K562 (cell line): ENCODE measurements at regions of chr2 and their contacts with region 1.

Region 1: GRCh38 chr2:119753041-119753929 is 6.4 kb upstream of the PTPN4 start:
- DNase-seq: peak in 2 of 4 experiments; percentile 56 to 69
- ATAC-seq: peak; percentile 90
- H3K4me3 ChIP-seq: no peak overlapping the region
- H3K27ac ChIP-seq: no peak overlapping the region
- H3K4me1 ChIP-seq: peaks cover 0 to 6% of the 10 kb centered on the region in 2 experiments; a peak in 3 of 5 replicates
- H3K27me3 ChIP-seq: 0 out of 5 replicates have a peak, but pooled peaks cover 4 to 5% of the 10 kb centered on the region in 2 experiments
- CTCF ChIP-seq: peak; percentile 72 to 91 (median 80)
- EP300 ChIP-seq: no peak
- POLR2A ChIP-seq: no peak
- RAD21 ChIP-seq: peak; percentile 87 to 93

Region 2: GRCh38 chr2:119826370-119826961 is 73.2 kb after region 1 on chr2:
- CTCF ChIA-PET with region 1: interaction called, 11 read pairs
- POLR2A ChIA-PET with region 1: no interaction called
- in situ Hi-C with region 1: no loop called
- intact Hi-C with region 1: loop called (anchors 1 kb)
- DNase-seq: peak; percentile 12 to 58 (median 28)
- ATAC-seq: peak; percentile 95
- H3K4me3 ChIP-seq: no peak overlapping the region
- H3K27ac ChIP-seq: no peak overlapping the region
- H3K4me1 ChIP-seq: 0 out of 5 replicates have a peak, but pooled peaks cover 0 to 3% of the 10 kb centered on the region in 2 experiments
- H3K27me3 ChIP-seq: no peaks in the 10 kb centered on the region
- CTCF ChIP-seq: peak; percentile 63 to 76 (median 68)
- EP300 ChIP-seq: no peak
- POLR2A ChIP-seq: no peak
- RAD21 ChIP-seq: peak; percentile 48 to 69

Region 3: GRCh38 chr2:120012771-120013596 is 259.7 kb after region 1 on chr2 and contains the start of gene EPB41L5:
- CTCF ChIA-PET with region 1: no interaction called
- POLR2A ChIA-PET with region 1: no interaction called
- in situ Hi-C with region 1: no loop called
- intact Hi-C with region 1: loop called (anchors 5 kb)
- DNase-seq: peak; percentile 82 to 95 (median 88)
- ATAC-seq: peak; percentile 92
- H3K4me3 ChIP-seq: peak within 1 kb of the TSS; percentile 84
- H3K27ac ChIP-seq: peak within 1 kb of the TSS; percentile 71
- H3K4me1 ChIP-seq: peaks cover 2 to 15% of the 10 kb centered on the region in 2 experiments; a peak in 3 of 5 replicates
- H3K27me3 ChIP-seq: no peaks in the 10 kb centered on the region
- CTCF ChIP-seq: no peak
- EP300 ChIP-seq: no peak
- POLR2A ChIP-seq: peak; percentile 65
- RAD21 ChIP-seq: no peak
- polyA plus RNA-seq, gene EPB41L5: 2.3 to 3.0 TPM

Region 4: DNA sequence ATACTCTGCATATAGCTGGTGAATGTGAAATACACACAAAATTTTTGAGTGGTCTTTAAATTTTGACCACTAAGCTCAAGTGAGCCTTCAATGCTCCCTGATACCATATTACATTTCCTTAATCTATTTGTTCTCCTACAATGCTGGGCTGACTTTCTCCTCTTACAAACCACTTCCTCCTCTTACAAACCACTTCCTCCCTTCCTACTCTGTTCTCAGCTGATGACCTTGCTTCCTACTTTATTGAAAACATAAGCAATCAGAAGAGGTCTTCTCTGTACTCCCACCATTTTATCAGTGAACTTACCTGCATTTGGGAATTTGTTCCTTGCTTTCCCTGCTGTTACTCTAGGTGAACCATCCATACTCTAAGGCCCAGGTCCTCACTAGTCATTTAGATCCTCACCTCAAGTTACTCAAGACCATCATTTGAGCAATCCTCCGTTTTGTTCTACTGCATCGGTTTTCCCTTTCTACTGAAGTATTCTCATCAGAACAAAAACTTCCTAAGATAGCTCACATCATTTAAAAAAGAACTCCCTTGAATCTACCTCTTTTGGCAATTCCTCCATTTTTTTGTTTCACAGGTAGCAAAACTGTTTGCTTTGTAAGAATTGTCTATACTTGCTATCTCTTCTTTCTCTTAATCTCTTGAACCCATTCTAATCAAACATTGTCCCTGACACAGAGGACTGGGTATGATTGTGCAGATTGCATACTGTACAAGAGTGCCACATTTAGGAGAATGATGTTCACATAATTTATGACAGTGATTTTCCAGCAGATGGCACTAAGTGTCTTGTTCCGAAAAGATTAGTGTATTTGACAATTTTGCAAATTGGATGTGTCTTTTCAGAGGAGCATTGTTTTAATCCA is 356.1 kb after region 1 on chr2:
- CTCF ChIA-PET with region 1: no interaction called
- POLR2A ChIA-PET with region 1: no interaction called
- in situ Hi-C with region 1: no loop called
- intact Hi-C with region 1: loop called (anchors 5 kb)
- DNase-seq: peak; percentile 8 to 23 (median 14)
- ATAC-seq: peak; percentile 86
- H3K4me3 ChIP-seq: no peak overlapping the region
- H3K27ac ChIP-seq: no peak overlapping the region
- H3K4me1 ChIP-seq: no peaks in the 10 kb centered on the region; a peak in 1 of 5 replicates
- H3K27me3 ChIP-seq: 0 out of 5 replicates have a peak, but pooled peaks cover 0 to 2% of the 10 kb centered on the region in 2 experiments
- CTCF ChIP-seq: peak; percentile 40 to 71 (median 49); a peak in 4 of 6 replicates
- EP300 ChIP-seq: no peak
- POLR2A ChIP-seq: no peak
- RAD21 ChIP-seq: peak; percentile 56 to 78